Activated CD4-positive, alpha-beta T cell treated with anti-CD3 and anti-CD28 coated beads for 36 hours (primary cell): ENCODE measurements at regions of chr15 and their contacts with region 1.

Region 1: DNA sequence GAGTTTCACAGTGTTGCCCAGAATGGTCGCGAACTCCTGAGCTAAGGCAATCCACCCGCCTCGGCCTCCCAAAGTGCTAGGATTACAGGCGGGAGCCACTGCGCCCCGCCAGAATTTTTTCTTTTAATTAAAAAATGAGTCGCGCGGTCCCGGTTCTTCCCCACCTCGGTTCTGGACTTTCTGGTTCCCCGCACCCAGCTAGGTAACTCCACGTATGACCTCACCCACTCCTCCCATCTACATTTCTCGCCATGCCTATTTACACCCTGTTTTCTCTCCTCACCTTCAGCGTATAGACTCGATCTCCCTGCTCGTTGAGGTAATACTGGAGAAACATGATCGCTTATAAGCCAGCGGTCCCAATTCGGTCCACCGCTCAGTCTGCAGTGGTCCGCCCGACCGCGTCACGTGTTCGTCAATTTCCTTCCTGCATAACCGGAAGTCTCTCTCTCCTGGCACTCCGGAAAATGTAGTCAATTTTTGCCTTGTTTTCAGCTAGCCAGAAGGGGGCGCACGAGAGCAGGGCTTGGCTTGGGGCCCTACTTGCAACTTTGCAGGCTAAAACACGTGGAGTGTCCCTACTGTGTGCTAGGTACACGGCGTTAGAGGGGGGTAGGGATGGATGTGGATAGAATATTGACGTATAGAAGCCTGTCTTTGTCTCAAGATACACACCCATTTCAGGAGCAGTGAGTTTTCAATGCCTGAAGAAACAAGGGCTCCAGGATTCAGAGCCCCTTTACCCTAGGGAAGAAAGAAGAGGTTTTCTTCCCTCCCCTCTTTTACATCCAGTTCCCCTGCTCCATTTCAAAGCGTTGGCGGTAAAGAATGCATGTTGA is at the starts of genes NOP10 and NUTM1:
- DNase-seq: peak; percentile 97
- ATAC-seq: peak; percentile 91
- H3K4me3 Mint-ChIP-seq: no peak within 1 kb of the TSS
- H3K27ac Mint-ChIP-seq: peak within 1 kb of the TSS; percentile 88
- H3K4me1 Mint-ChIP-seq: peaks cover 30% of the 10 kb centered on the region
- H3K27me3 Mint-ChIP-seq: no peaks in the 10 kb centered on the region
- total RNA-seq, gene NOP10: 217 to 313 TPM
- total RNA-seq, gene NUTM1: not detected

Region 2: DNA sequence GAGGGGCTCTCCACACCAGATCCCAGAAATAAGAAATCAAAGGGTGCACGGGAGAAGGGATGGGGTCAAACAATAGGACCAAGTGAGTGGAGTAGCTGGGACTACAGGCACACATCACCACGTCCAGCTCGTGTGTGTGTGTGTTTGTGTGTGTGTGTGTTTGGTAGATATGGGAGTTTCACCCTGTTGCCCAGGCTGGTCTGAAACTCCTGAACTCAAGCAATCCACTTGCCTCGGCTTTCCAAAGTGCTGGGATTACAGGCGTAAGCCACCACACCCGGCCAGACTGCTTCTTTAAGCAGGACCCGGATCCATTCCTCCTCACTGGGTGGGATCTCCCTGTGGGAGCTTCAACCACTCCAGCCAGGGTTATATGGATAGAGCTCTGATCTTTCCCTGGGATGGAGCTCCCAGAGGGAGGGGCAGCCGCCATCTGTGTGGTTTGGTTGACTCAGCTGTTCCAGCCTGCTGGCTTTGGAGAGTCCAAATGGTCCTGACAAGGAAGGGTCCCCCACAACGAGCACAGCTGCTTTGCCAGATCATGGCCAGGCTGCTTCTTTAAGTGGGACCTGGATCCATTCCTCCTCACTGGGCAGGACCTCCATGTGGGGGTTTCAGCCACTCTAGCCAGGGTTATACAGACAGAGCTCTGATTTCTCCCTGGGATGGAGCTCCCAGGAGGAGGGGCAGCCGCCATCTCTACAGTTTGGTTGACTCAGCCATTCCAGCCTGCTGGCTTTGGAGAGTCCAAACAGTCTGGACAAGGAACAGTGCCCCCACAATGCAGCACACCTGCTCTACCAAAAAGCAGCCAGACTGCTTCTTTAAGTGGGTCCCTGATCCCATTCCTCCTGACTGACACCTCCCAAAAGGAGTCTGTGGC is 294.8 kb before region 1 on chr15:
- CTCF ChIA-PET with region 1: no interaction called
- POLR2A ChIA-PET with region 1: no interaction called
- intact Hi-C with region 1: no loop called
- DNase-seq: no peak
- ATAC-seq: no peak
- H3K4me3 Mint-ChIP-seq: no peak overlapping the region
- H3K27ac Mint-ChIP-seq: no peak overlapping the region
- H3K4me1 Mint-ChIP-seq: peaks cover 13% of the 10 kb centered on the region
- H3K27me3 Mint-ChIP-seq: no peaks in the 10 kb centered on the region

Region 3: DNA sequence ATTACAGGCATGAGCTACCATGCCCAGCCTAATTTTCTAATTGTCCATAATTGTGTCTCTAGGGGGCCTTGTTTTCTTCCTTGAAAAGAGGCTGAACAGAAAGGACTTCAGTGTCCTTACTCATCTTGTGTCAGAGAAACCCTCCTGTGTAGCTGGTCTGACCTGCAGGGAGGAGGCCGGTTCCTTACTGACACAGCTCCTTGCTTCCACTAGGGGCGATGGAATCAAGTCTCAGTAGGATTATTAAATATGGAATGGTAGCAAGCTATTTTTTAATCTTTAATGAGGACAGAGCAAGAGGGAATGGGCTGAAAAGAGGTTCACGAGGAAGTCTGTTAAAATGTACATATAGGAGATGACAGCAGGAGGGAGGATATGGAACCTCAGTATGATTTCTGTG is 15.4 kb after region 1 on chr15:
- CTCF ChIA-PET with region 1: interaction called, 13 read pairs
- POLR2A ChIA-PET with region 1: no interaction called
- intact Hi-C with region 1: no loop called
- DNase-seq: no peak
- ATAC-seq: no peak
- H3K4me3 Mint-ChIP-seq: no peak overlapping the region
- H3K27ac Mint-ChIP-seq: no peak overlapping the region
- H3K4me1 Mint-ChIP-seq: no peaks in the 10 kb centered on the region
- H3K27me3 Mint-ChIP-seq: no peaks in the 10 kb centered on the region

Region 4: DNA sequence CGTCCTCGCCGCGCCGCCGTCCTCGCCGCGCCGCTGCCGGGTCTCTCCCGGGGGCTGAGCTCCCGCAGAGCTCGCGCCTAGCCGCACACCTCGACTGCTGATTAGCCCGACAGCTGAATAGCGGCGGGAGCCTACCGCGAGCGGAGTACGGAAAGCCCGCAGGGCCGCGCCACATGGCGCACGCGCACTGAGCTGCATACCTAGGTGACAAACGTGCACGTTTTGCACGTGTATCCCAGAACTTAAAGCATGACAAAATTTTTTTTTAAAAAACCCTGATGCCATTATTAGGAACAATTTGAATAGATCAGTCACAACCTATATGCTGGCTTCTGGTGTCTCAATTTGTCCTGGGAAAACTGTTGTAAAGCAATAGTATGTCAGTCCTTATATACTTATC is 94.7 kb after region 1 on chr15 and contains the start of gene GOLGA8A:
- CTCF ChIA-PET with region 1: no interaction called
- POLR2A ChIA-PET with region 1: no interaction called
- intact Hi-C with region 1: loop called in 1 of 2 experiments (anchors 2 kb)
- DNase-seq: peak; percentile 94
- ATAC-seq: peak; percentile 85
- H3K4me3 Mint-ChIP-seq: peak within 1 kb of the TSS; percentile 86
- H3K27ac Mint-ChIP-seq: peak within 1 kb of the TSS; percentile 95
- H3K4me1 Mint-ChIP-seq: peaks cover 18% of the 10 kb centered on the region
- H3K27me3 Mint-ChIP-seq: peaks cover under 1% of the 10 kb centered on the region
- total RNA-seq, gene GOLGA8A: 147 to 165 TPM

Region 5: DNA sequence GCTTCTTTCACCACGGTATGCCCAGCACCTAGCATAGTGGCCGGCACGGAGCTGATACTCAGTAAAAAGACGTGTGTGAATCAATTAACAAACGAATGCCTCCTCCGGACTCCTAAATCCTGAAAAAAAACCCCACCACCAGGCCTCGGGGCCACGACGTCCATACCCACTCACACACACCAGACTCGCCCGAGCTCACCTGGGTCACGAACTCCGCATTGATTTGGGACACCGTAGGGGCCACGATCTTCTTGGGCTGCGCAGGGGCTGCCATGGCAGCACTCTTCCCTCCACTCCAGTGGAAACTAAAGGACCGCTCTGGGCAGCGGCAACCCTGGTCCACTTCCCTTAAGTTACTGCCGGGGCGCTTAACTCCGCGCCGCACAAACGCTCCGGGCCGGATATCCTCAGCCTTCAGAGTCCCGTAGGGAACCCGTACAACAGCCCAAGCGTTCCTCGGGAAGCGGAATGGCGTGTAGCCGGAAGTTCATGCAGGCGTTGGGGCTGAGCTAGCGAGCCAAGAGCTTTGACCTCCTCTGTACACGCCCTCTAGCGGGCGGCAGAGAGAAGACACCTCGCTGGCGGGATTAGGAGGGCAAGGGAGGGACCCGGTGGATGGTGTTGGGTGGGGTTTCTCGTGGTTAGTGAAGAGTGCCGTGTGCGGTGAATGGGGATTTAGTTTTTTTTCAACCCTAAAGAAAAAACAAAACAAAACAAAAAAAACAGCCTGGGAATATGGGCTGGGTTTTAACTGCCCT is 626.6 kb after region 1 on chr15 and contains the start of gene AQR:
- CTCF ChIA-PET with region 1: interaction called, 3 read pairs
- POLR2A ChIA-PET with region 1: no interaction called
- intact Hi-C with region 1: loop called in 1 of 2 experiments (anchors 5 kb)
- DNase-seq: peak; percentile 95
- ATAC-seq: peak; percentile 99
- H3K4me3 Mint-ChIP-seq: peak within 1 kb of the TSS; percentile 98
- H3K27ac Mint-ChIP-seq: peak within 1 kb of the TSS; percentile 91
- H3K4me1 Mint-ChIP-seq: peaks cover 35% of the 10 kb centered on the region
- H3K27me3 Mint-ChIP-seq: no peaks in the 10 kb centered on the region
- total RNA-seq, gene AQR: 39.2 to 62.0 TPM